ENCODE measurements at regions of chr11 and their contacts with region 1.

Region 1: DNA sequence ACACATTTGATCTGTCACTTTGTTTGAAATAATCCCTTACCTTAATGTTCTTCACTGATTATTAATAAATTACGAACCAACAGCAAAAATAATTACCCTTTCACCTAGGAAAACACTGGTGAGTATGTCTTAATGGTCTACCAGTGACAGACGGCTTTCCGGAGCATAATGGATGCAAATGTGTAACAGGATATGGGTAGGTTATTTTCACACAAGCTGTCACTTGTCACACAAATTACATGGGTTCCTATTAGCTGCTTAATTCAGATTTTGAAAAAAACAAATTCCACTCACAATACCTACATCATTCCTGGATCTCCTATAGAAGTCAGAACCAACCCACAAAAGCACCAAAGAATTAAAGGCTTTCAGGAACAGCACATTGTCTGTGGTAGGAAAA is 127.9 kb downstream of the WT1 start:
- DNase-seq: no peak
- H3K4me3 Mint-ChIP-seq: no peak overlapping the region
- H3K27ac Mint-ChIP-seq: no peak overlapping the region
- H3K4me1 Mint-ChIP-seq: peaks cover 7% of the 10 kb centered on the region
- H3K27me3 Mint-ChIP-seq: peaks cover 60% of the 10 kb centered on the region
- CTCF ChIP-seq: no peak

Region 2: GRCh38 chr11:32244453-32244852 is 63.0 kb before region 1 on chr11:
- CTCF ChIA-PET with region 1: interaction called, 10 read pairs
- intact Hi-C with region 1: no loop called
- DNase-seq: no peak
- H3K4me3 Mint-ChIP-seq: no peak overlapping the region
- H3K27ac Mint-ChIP-seq: no peak overlapping the region
- H3K4me1 Mint-ChIP-seq: no peaks in the 10 kb centered on the region
- H3K27me3 Mint-ChIP-seq: no peaks in the 10 kb centered on the region
- CTCF ChIP-seq: no peak

Region 3: GRCh38 chr11:32358729-32359128 is 51.3 kb after region 1 on chr11:
- CTCF ChIA-PET with region 1: interaction called, 12 read pairs
- intact Hi-C with region 1: no loop called
- DNase-seq: no peak
- H3K4me3 Mint-ChIP-seq: no peak overlapping the region
- H3K27ac Mint-ChIP-seq: no peak overlapping the region
- H3K4me1 Mint-ChIP-seq: no peaks in the 10 kb centered on the region
- H3K27me3 Mint-ChIP-seq: peaks cover 61% of the 10 kb centered on the region
- CTCF ChIP-seq: no peak

Region 4: GRCh38 chr11:32940865-32941264 is 633.4 kb after region 1 on chr11:
- CTCF ChIA-PET with region 1: no interaction called
- intact Hi-C with region 1: no loop called
- DNase-seq: no peak
- H3K4me3 Mint-ChIP-seq: no peak overlapping the region
- H3K27ac Mint-ChIP-seq: no peak overlapping the region
- H3K4me1 Mint-ChIP-seq: no peaks in the 10 kb centered on the region
- H3K27me3 Mint-ChIP-seq: no peaks in the 10 kb centered on the region
- CTCF ChIP-seq: no peak